H1 (cell line): ENCODE measurements at regions of chr1 and their contacts with region 1.

Region 1: DNA sequence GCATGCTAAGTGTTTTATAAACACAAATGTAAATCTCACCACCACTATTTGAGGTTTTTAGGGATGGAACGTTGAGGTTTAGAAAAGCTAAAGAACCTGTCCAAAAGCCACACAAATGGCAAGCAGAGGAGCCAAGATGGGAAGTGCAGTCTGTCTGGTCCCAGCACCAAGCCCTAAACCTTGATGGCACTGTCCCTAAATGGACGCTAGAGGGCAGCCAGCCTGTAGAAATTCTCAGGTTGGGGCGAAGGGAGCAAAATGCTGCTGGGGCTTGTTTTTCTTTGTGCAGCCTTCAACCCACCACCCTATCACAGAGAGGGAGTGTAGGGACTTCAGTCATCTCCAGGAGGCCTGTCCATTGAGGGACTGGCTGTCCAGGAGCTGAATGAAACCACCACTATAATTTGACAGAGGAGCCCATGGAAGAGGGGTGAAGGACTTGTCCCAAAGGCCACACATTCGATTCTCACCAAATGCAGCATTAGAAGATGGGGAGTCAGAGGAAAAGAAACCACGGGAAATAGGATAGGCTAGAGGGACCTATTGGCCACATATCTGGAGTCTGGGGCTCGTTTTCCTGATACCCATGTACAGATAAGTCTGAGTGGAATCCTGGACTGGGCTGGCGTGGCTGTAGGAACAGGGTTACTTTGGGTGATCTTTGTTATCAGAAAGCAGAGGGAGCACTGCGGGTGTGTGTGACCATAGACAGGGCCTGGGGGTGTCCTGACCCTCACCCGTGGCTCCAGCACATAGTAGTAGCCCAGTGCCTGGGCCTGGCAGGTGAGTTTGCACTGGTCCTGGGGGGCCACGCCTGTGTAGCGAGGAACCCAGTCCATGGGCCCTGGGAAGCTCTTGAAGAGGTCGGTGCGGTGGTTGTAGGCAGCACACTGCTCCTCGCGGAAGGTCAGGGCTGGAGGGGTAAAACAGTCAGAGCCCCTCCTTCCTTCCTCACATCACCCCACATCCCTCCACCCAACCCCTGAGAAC is 6.1 kb downstream of the ADAMTS4 start:
- DNase-seq: peak in 1 of 2 experiments; percentile 70
- H3K4me3 ChIP-seq: no peak overlapping the region
- H3K27ac ChIP-seq: no peak overlapping the region
- H3K4me1 ChIP-seq: peaks cover 3 to 12% (median 11%) of the 10 kb centered on the region in 4 experiments
- H3K27me3 ChIP-seq: no peaks in the 10 kb centered on the region; a peak in 1 of 7 replicates
- CTCF ChIP-seq: peak; percentile 83 to 97 (median 83)
- EP300 ChIP-seq: no peak
- POLR2A ChIP-seq: no peak
- RAD21 ChIP-seq: peak; percentile 81 to 84

Region 2: GRCh38 chr1:161001525-161001924 is 191.2 kb before region 1 on chr1:
- CTCF ChIA-PET with region 1: no interaction called
- POLR2A ChIA-PET with region 1: no interaction called
- DNase-seq: no peak
- H3K4me3 ChIP-seq: no peak overlapping the region
- H3K27ac ChIP-seq: no peak overlapping the region
- H3K4me1 ChIP-seq: peaks cover 0 to 3% (median 0%) of the 10 kb centered on the region in 4 experiments; a peak in 2 of 7 replicates
- H3K27me3 ChIP-seq: no peaks in the 10 kb centered on the region
- CTCF ChIP-seq: no peak
- EP300 ChIP-seq: no peak
- POLR2A ChIP-seq: no peak
- RAD21 ChIP-seq: no peak

Region 3: DNA sequence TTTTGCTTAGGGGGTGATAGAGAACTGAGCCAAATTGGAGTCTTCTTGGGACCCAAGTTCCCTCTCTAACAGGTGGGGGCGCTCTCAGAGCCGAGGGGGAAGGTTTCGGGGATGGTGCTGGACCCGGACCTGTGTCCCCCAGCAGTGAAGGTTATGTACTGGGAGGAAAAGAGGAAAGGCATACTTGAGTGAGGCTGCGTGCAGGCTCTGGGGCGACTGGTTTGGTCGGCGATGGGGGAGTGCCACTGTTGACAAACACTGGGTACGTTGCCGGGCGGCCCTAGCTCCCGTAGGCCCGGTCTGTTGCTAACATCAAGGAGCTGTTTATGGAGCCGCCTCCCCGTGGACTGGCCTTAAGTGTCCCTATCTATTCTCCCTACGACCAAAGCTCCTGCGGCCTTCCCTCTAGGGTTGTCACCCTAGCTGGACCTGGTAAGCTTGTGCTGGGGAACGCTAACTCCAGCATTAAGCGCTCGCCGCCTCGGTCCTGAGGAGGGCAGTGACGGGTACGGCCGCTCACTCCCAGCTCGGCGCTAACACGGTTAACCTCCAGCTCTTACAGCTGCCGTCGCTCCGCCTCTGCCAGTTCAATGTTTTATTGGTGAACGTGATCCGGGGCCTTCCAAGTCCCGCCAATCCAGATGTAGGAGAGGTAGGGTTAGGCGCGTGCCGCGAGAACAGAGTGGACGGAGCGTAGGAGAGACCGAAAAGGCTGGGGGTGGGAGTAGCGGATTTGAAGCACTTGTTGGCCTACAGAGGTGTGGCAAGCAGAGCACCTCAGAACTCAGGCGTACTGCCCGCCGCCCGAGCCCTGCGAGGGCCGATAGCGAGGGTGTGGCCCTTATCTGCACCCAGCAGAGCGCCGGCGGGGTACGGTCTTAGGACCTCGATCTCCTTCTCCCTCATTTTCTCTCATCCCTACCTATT is 26.8 kb before region 1 on chr1 and contains the start of gene PPOX:
- CTCF ChIA-PET with region 1: interaction called, 11 read pairs
- POLR2A ChIA-PET with region 1: interaction called, 9 read pairs
- DNase-seq: peak; percentile 90 to 94
- H3K4me3 ChIP-seq: peak within 1 kb of the TSS; percentile 64 to 87 (median 82)
- H3K27ac ChIP-seq: peak within 1 kb of the TSS; percentile 47
- H3K4me1 ChIP-seq: peaks cover 0 to 7% (median 5%) of the 10 kb centered on the region in 4 experiments; a peak in 4 of 7 replicates
- H3K27me3 ChIP-seq: no peaks in the 10 kb centered on the region
- CTCF ChIP-seq: peak; percentile 45 to 55 (median 50)
- EP300 ChIP-seq: 0 out of 3 replicates have a peak, but pooled peaks of 1 of the 2 experiments have one; percentile 14
- POLR2A ChIP-seq: peak; percentile 56 to 84
- RAD21 ChIP-seq: no peak
- total RNA-seq, gene PPOX: 32.1 and 40.4 TPM in 2 replicates

Region 4: DNA sequence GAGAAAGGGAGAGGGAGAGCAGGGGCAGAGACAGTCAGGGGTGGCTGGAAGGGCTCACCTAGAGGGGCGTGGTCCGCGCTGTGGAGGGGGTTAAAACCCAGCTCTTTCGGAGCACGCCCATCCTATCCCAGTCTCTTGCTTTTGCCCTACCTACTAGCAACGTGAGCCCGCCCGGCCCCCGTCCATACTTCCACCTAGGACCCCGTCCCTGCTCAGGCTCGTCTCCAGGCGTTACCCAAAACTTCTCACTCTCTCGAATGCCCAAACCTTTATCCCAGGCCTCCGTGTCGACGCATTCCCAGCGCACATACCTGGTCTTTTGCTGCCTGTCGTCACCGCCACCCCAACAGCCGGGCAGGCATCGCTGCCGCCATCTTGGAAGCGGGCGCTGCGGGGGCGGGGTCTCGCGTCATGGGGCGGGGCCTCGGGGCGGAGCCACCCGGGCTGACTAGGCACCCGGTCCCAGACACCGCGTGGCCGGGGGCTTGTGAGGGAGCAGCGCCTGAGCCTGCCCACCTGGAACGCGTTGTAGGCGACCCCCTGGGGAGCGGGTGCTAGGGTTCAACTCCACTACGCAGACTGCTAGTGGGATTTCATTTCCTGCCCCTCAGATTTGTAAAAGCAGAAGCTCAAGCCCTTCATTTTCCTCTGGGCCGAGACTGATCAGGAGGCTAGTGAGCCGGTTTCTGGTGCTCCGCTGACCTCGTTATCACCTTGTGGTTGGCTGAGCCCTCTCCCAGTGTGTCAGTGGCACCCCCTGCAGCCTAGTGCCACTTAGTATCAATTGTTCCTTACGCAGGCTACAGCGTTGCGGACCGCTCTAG is 15.4 kb before region 1 on chr1 and contains the start of gene B4GALT3:
- CTCF ChIA-PET with region 1: interaction called, 37 read pairs
- POLR2A ChIA-PET with region 1: interaction called, 21 read pairs
- DNase-seq: peak in 1 of 2 experiments; percentile 100
- H3K4me3 ChIP-seq: peak within 1 kb of the TSS; percentile 66 to 96 (median 84)
- H3K27ac ChIP-seq: peak within 1 kb of the TSS; percentile 88
- H3K4me1 ChIP-seq: peaks cover 0 to 13% (median under 1%) of the 10 kb centered on the region in 4 experiments; a peak in 3 of 7 replicates
- H3K27me3 ChIP-seq: no peaks in the 10 kb centered on the region
- CTCF ChIP-seq: peak; percentile 32 to 40 (median 38); a peak in 3 of 4 replicates
- EP300 ChIP-seq: no peak
- POLR2A ChIP-seq: peak; percentile 89 to 97
- RAD21 ChIP-seq: peak in 1 of 2 experiments; percentile 23; a peak in 2 of 4 replicates
- total RNA-seq, gene B4GALT3: 42.3 and 45.5 TPM in 2 replicates

Region 5: GRCh38 chr1:161209790-161210409 is 17.1 kb after region 1 on chr1:
- CTCF ChIA-PET with region 1: interaction called, 427 read pairs
- POLR2A ChIA-PET with region 1: interaction called, 6 read pairs
- DNase-seq: peak; percentile 67 to 92
- H3K4me3 ChIP-seq: no peak overlapping the region
- H3K27ac ChIP-seq: 0 out of 2 replicates have a peak overlapping the region, but pooled peaks have one; percentile 5
- H3K4me1 ChIP-seq: peaks cover 0 to 4% (median 1%) of the 10 kb centered on the region in 4 experiments; a peak in 4 of 7 replicates
- H3K27me3 ChIP-seq: no peaks in the 10 kb centered on the region
- CTCF ChIP-seq: peak; percentile 89 to 98 (median 97)
- EP300 ChIP-seq: 0 out of 3 replicates have a peak, but pooled peaks of 1 of the 2 experiments have one; percentile 41
- POLR2A ChIP-seq: no peak
- RAD21 ChIP-seq: peak; percentile 94 to 98

Region 6: DNA sequence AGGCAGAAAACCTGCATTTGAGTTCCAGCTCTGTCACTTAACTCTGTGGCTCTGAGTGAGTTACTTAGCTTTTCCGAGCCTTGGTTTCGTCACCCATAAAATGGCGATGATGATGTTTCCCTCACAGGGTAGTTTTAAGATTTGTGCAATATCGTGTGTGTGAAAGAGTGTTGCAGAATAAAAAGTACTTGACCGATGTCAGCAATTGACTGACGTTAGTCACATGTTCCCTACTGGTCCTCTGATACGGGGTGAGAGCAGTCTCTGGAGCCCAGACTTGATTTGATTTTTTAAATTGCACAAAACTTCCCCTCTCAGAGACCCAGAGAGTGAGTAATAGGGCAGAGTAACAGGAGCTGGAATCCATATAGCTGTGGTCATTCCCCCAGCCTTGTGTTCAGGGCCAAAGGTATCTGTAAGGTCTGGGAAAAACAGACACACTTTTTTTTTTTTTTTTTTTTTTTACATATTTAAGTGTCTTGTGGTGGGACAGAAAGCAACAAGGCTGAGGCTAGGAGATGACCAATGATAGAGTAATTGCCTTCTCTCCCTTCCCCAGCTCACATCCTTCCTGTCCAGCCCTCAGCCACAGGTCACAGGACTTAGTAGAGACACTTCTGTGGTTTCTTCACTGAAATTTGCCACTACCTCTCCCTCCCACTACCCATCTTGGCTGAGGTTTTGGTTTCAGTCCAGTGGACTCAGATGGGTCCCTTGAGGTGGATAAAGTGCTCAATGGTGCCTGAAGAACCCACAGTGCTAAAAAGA is 24.4 kb after region 1 on chr1:
- CTCF ChIA-PET with region 1: interaction called, 427 read pairs
- POLR2A ChIA-PET with region 1: interaction called, 5 read pairs
- DNase-seq: no peak
- H3K4me3 ChIP-seq: no peak overlapping the region
- H3K27ac ChIP-seq: no peak overlapping the region
- H3K4me1 ChIP-seq: peaks cover 0 to 13% (median 0%) of the 10 kb centered on the region in 4 experiments; a peak in 3 of 7 replicates
- H3K27me3 ChIP-seq: 0 out of 7 replicates have a peak, but pooled peaks cover 0 to under 1% (median 0%) of the 10 kb centered on the region in 4 experiments
- CTCF ChIP-seq: no peak
- EP300 ChIP-seq: no peak
- POLR2A ChIP-seq: no peak
- RAD21 ChIP-seq: no peak